Activated B cell treated with CpG ODN at 0.5 μM for 24 hours (primary cell): ENCODE measurements at regions of chr11 and their contacts with region 1.

Region 1: DNA sequence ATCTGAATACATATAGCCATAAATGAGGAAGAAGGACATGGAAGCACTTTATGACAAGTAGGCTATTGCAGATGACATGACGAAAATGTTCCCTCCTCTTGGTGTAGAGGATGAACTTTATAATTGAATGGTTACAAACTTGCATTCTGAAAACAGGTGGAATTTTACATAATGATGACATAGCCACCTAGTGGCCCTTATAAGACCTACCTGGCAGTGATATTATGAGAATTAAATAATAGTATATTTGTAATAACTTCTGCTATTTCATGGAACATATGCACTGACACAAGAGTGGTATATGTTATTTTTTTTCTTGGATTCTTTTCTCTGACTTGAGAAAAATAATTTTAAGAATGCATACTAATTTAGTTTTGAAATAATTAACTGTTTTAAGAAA is 22.9 kb downstream of the TRIM22 start:
- DNase-seq: no peak
- ATAC-seq: peak; percentile 52
- H3K4me3 Mint-ChIP-seq: no peak overlapping the region
- H3K27ac Mint-ChIP-seq: no peak overlapping the region
- H3K4me1 Mint-ChIP-seq: no peaks in the 10 kb centered on the region
- H3K27me3 Mint-ChIP-seq: no peaks in the 10 kb centered on the region
- CTCF ChIP-seq: no peak

Region 2: GRCh38 chr11:5476184-5476819 is 236.2 kb before region 1 on chr11:
- CTCF ChIA-PET with region 1: no interaction called
- POLR2A ChIA-PET with region 1: no interaction called
- intact Hi-C with region 1: loop called (anchors 2 kb)
- DNase-seq: no peak
- ATAC-seq: peak; percentile 52
- H3K4me3 Mint-ChIP-seq: no peak overlapping the region
- H3K27ac Mint-ChIP-seq: no peak overlapping the region
- H3K4me1 Mint-ChIP-seq: no peaks in the 10 kb centered on the region
- H3K27me3 Mint-ChIP-seq: peaks cover 13% of the 10 kb centered on the region
- CTCF ChIP-seq: no peak

Region 3: GRCh38 chr11:5600374-5600851 is 112.1 kb before region 1 on chr11:
- CTCF ChIA-PET with region 1: interaction called, 14 read pairs
- POLR2A ChIA-PET with region 1: no interaction called
- intact Hi-C with region 1: loop called (anchors 1 kb)
- DNase-seq: peak; percentile 25
- ATAC-seq: peak; percentile 95
- H3K4me3 Mint-ChIP-seq: no peak overlapping the region
- H3K27ac Mint-ChIP-seq: no peak overlapping the region
- H3K4me1 Mint-ChIP-seq: peaks cover 17% of the 10 kb centered on the region
- H3K27me3 Mint-ChIP-seq: peaks cover 3% of the 10 kb centered on the region
- CTCF ChIP-seq: no peak

Region 4: DNA sequence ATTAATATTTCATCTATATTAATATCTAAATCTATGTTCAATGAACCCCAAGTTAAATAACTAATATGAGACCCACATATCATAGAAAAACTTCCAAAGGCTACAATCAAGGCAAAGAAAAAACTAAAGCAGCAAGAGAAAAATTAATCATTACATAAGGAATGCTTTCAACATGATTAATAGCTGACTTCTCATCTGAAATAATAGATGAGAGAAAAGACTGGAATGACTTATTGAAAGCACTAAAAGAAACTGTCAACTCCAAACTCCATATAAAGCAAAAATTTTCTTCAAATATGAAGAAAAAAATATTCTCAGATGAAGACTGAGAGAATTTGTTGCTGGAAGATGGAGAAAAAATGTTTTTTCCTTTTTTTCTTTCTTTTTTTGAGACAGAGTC is 40.7 kb before region 1 on chr11:
- CTCF ChIA-PET with region 1: no interaction called
- POLR2A ChIA-PET with region 1: no interaction called
- intact Hi-C with region 1: loop called (anchors 5 kb)
- DNase-seq: no peak
- ATAC-seq: no peak
- H3K4me3 Mint-ChIP-seq: no peak overlapping the region
- H3K27ac Mint-ChIP-seq: no peak overlapping the region
- H3K4me1 Mint-ChIP-seq: peaks cover 4% of the 10 kb centered on the region
- H3K27me3 Mint-ChIP-seq: no peaks in the 10 kb centered on the region
- CTCF ChIP-seq: no peak